Posterior cingulate gyrus (tissue), 11 donors: ENCODE measurements at regions of chr6 and their contacts with region 1.

Region 1: DNA sequence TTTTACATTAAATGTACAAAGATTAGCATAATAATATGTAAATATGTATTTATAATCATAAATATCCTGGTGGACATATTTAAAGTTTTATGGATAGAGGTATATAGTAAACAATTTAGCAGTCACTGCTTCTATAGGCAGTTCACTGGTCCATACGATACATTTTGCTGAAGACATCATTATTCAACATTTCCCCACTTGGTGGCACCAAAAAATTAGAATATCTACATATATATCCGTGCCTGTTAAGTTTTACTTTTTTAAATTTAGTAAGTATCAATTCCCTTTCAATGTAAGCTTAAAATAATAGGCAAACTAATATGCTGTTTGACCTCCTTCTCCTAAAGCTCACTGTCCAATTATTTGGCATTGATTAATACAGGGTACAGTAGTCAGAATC is 64.2 kb downstream of the LMBRD1 start:
- DNase-seq: no peak

Region 2: GRCh38 chr6:69827276-69827893 is 94.7 kb after region 1 on chr6:
- intact Hi-C with region 1: no loop called
- DNase-seq: no peak

Region 3: GRCh38 chr6:70107852-70108629 is 375.4 kb after region 1 on chr6:
- intact Hi-C with region 1: loop called (anchors 5 kb)
- DNase-seq: no peak

Region 4: DNA sequence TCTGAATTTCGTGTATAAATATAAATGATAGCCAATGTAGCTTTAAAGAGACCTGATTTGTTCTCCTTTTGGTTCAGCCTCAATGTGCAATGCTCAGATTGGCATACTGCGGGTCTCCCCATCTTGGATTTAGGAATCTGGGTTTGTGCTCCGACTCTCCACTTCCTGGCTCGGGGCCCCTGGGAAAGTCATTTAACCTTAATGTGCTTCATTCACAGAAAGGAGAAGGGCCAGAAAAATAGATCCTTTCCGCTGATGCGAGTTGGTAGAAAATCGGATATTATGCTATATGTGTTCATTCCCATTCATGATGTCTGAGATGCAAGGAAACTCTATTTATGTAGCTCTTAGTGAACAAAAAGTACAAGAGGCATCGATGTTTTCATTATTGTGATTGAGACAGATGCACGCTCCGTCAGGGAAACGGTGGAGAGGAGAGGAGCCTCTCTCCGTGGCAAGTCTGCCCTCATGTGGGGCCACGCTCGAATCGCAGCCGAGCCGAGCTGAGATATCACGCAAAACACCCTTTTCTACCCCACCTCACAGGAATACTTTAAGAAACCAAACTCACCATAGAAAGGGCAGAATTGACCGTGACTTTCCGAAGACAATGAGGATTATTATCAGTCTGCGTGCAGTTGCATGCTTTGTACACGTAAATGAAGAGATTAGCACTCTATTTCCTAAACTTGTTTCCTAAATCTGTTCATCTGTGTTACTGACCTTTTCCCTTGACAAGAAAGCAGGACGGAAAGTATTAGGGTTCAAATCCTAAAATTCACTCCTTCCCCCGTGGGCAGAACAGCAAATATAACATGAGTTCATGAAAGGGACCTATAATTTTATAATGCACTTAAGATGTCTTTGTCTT is 433.7 kb after region 1 on chr6:
- intact Hi-C with region 1: loop called (anchors 5 kb)
- DNase-seq: peak; percentile 52 to 97 (median 76)